AG04449 (cell line): ENCODE measurements at regions of chr4 and their contacts with region 1.

Region 1: DNA sequence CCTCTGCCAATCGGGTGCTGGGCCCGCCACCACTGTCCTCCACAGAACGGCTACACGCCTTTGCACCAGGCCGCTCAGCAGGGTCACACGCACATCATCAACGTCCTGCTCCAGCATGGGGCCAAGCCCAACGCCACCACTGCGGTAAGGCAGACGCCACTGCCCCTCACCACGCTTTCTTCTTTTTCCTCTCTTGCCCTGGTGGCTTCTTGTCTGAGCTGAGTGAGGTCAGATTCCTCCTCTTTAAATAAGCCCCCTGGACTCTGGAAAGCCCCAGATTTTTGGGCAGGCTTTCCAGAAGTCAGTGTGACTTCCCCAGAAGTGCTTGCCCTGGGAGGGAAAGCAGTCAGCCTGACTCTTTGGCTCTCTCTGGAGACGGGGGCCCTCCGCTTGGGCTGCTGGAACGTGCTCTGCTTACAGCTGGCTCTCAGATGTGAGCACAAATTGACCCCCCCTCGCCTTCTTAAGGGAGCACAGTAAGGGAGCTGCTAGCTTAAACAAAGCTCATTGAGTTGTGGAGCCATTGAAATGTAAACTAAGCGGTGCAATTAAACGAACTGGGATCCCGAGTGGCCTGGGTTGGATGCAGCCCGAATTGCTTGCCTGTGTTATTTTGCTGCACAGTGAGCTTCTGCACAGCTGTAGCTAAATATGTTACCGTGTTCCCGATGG is 243.1 kb downstream of the ANK2 start:
- DNase-seq: no peak
- H3K4me3 ChIP-seq: no peak overlapping the region
- CTCF ChIP-seq: no peak

Region 2: DNA sequence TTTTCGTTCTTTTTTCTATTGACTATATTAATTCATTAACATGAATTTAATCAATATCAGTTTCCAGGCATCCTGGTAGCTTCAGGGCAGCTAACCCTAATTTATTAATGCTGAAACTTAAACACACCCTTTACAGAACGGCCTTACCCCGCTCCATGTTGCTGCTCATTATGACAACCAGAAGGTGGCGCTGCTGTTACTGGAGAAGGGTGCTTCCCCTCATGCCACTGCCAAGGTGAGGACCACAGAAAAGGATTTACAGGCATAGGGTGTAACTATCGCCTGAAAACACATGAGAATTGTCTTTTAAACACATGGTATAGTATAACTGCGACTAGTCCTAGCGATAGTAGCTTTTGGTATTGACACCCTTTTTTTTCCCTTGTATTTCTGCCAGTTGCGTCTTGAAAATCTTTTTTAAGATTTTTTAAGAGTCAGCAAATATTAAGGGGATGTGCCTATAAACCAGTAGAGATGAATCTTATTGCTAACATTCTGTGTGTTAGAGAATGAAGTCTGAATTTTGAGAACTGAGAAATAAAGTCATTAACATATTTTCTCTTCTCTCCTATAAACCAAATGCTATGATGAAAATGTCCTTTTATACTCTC is 14.1 kb before region 1 on chr4:
- CTCF ChIA-PET with region 1: interaction called, 50 read pairs
- POLR2A ChIA-PET with region 1: no interaction called
- DNase-seq: no peak
- H3K4me3 ChIP-seq: no peak overlapping the region
- CTCF ChIP-seq: peak; percentile 95

Region 3: GRCh38 chr4:113303315-113303714 is 10.8 kb after region 1 on chr4:
- CTCF ChIA-PET with region 1: interaction called, 13 read pairs
- POLR2A ChIA-PET with region 1: no interaction called
- DNase-seq: no peak
- H3K4me3 ChIP-seq: no peak overlapping the region
- CTCF ChIP-seq: no peak